Transverse colon (tissue), 4 donors: ENCODE measurements at regions of chr11 and their contacts with region 1.

Region 1: GRCh38 chr11:2151500-2152257 is 9.3 kb downstream of the INS start:
- DNase-seq: peak; percentile 85
- H3K4me3 ChIP-seq: peak overlapping the region in 1 of 4 donors; percentile 6
- H3K27ac ChIP-seq: no peak overlapping the region
- H3K4me1 ChIP-seq: peaks cover 0 to 6% (median 5%) of the 10 kb centered on the region in 4 donors
- H3K27me3 ChIP-seq: peaks cover 56% of the 10 kb centered on the region
- CTCF ChIP-seq: peak; percentile 80 to 90 (median 88)
- EP300 ChIP-seq: no peak
- POLR2A ChIP-seq: no peak

Region 2: GRCh38 chr11:1652771-1653540 is 498.7 kb before region 1 on chr11:
- in situ Hi-C with region 1: loop called in 1 of 4 experiments (anchors 10 kb)
- intact Hi-C with region 1: no loop called
- DNase-seq: peak; percentile 77
- H3K4me3 ChIP-seq: no peak overlapping the region
- H3K27ac ChIP-seq: no peak overlapping the region
- H3K4me1 ChIP-seq: peaks cover 0 to 3% (median 0%) of the 10 kb centered on the region in 4 donors
- H3K27me3 ChIP-seq: peaks cover 22% of the 10 kb centered on the region
- CTCF ChIP-seq: peak; percentile 95 to 99 (median 98)
- EP300 ChIP-seq: no peak
- POLR2A ChIP-seq: no peak

Region 3: DNA sequence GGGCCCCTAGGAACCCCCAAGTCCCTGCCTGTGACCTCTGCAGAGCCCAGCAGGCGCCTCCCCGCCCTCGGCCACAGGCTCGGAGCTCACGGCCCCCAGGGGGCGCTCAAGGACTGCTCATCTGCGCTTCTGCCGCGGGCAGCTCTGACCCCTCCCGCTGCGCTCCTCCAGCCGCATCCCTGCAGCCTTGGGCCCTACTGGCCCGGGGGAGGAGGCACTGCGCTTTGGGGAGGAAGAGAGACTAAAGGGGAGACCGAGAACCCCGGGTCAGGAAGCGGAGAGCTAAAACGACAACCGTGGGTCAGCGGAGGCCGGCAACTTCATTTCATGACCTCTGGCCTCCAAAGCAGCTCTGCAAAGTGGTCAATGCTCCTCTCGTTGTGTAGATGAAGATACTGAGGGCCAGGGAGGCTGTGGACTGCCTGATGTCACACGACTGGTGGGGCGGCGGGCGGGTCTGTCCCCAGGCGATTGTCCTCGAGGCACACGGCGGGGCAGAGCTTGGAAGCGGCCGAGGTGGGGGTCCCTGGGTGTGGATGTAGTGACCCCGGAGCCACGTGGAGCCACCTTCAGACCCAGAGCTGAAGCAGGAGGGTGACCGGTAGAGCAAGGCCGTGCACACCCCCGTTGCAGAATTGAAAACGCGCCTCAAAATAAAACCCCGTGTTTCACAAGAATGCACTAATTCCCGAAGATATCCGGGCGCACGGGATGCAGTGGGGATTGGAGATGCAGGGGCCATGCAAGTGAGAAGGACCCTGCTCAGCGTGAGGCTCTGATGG is 457.4 kb before region 1 on chr11:
- in situ Hi-C with region 1: loop called in 2 of 4 experiments (anchors 25 kb)
- intact Hi-C with region 1: loop called (anchors 5 kb)
- DNase-seq: peak; percentile 91
- H3K4me3 ChIP-seq: peak overlapping the region; percentile 12 to 55 (median 17)
- H3K27ac ChIP-seq: peak overlapping the region in 3 of 4 donors; percentile 24 to 67 (median 42)
- H3K4me1 ChIP-seq: peaks cover 6 to 13% (median 11%) of the 10 kb centered on the region in 4 donors
- H3K27me3 ChIP-seq: peaks cover 13% of the 10 kb centered on the region
- CTCF ChIP-seq: peak; percentile 91 to 96 (median 95)
- EP300 ChIP-seq: no peak
- POLR2A ChIP-seq: no peak

Region 4: GRCh38 chr11:1706634-1707400 is 444.9 kb before region 1 on chr11:
- in situ Hi-C with region 1: loop called in 1 of 4 experiments (anchors 25 kb)
- intact Hi-C with region 1: no loop called
- DNase-seq: no peak
- H3K4me3 ChIP-seq: no peak overlapping the region
- H3K27ac ChIP-seq: no peak overlapping the region
- H3K4me1 ChIP-seq: no peaks in the 10 kb centered on the region
- H3K27me3 ChIP-seq: peaks cover 49% of the 10 kb centered on the region
- CTCF ChIP-seq: peak in 1 of 5 experiments; percentile 19
- EP300 ChIP-seq: no peak
- POLR2A ChIP-seq: no peak

Region 5: DNA sequence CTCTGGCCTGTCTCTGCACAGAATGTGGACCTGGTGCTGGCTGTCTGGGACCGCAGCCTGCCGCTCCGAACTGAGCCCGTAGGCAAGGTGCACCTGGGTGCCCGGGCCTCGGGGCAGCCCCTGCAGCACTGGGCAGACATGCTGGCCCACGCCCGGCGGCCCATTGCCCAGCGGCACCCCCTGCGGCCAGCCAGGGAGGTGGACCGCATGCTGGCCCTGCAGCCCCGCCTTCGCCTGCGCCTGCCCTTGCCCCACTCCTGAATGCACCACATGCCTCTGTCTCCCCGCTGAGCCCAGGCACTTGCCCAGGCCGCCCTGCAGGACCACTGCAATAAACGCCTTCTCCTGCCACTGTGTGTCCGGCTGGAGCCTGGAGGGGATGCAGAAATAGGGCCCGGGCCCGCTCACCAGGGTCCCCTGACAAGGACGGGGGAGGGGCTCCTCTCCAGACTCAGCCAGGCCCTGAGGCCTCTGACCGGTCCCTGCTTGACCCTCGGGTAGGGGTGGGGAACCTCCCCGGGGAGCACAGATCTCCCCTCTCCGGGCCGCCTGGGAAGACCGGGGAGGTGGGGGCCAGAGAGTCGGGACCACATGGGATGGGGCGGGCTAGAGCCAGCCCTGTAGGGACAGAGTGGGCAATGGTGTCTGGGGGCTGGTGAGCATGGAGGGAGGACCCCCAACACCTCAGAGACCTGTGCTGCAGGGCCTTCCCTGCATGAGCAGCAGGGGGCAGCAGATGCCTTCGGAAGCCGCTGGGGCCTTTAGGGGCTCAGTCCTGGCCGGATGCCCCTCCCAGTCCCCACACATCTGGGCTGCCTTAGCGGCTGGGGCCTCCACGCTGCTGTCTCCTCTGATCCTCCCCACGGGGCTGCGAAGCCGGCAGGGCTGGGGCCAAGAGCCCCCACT is 314.3 kb before region 1 on chr11:
- in situ Hi-C with region 1: no loop called
- intact Hi-C with region 1: loop called (anchors 5 kb)
- DNase-seq: peak; percentile 76
- H3K4me3 ChIP-seq: no peak overlapping the region
- H3K27ac ChIP-seq: no peak overlapping the region
- H3K4me1 ChIP-seq: peaks cover 14 to 28% (median 26%) of the 10 kb centered on the region in 4 donors
- H3K27me3 ChIP-seq: no peaks in the 10 kb centered on the region
- CTCF ChIP-seq: peak; percentile 82 to 90 (median 83)
- EP300 ChIP-seq: no peak
- POLR2A ChIP-seq: no peak

Region 6: GRCh38 chr11:2651826-2652271 is 500.2 kb after region 1 on chr11:
- in situ Hi-C with region 1: no loop called
- intact Hi-C with region 1: no loop called
- DNase-seq: no peak
- H3K4me3 ChIP-seq: no peak overlapping the region
- H3K27ac ChIP-seq: no peak overlapping the region
- H3K4me1 ChIP-seq: no peaks in the 10 kb centered on the region
- H3K27me3 ChIP-seq: no peaks in the 10 kb centered on the region
- CTCF ChIP-seq: no peak
- EP300 ChIP-seq: no peak
- POLR2A ChIP-seq: no peak